Activated naive CD4-positive, alpha-beta T cell treated with anti-CD3 and anti-CD28 coated beads for 36 hours (primary cell): ENCODE measurements at regions of chr12 and their contacts with region 1.

Region 1: DNA sequence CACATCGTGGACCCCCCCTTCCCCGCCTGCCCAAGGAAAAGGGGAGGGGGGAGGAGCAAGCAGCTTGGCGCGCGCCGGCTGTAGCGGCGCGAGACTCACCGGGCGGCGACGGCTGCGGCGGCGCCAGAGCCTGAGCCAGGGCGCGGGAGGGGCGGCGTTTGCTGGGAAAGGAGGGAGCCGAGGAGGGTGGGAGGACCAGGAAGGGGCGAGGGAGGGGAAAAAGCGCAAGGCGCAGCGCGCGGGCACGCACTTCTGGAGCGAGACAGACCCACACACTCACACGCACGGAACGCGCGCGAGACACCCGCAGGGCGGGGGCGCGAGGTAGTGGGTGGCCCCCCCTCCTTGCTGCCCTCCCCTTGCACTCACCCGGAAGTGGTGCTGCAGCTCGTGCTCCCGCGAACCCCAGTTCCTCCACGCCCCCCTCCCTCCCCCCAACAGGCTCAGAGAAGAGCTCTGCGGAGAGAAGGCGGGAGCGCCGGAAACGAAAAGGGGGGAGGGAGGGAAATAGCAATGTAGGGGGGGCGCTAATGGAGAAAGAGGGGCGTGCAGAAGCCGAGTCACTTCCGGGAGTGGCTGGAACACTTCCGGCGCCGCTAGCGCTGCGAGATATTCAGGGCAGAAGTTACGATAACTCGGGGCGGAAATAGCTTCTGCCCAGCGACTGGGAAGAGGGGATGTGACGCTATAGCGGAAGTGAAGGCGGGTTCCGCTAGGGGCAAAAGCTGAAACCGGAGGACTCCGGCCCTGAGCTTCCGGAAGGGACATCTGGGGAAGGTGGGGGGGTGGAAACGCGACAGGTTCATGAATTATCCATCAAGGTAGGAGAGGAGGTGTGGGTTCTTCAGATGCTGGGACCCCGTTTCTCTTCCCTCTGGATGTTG is at the start of gene ZNF384:
- DNase-seq: peak; percentile 97
- H3K4me3 Mint-ChIP-seq: peak within 1 kb of the TSS; percentile 92
- H3K27ac Mint-ChIP-seq: peak within 1 kb of the TSS; percentile 95
- H3K4me1 Mint-ChIP-seq: peaks cover 52% of the 10 kb centered on the region
- H3K27me3 Mint-ChIP-seq: no peaks in the 10 kb centered on the region
- total RNA-seq, gene ZNF384: 52.6 to 56.6 TPM

Region 2: GRCh38 chr12:6554168-6555017 is 134.8 kb before region 1 on chr12:
- CTCF ChIA-PET with region 1: interaction called, 3 read pairs
- intact Hi-C with region 1: loop called (anchors 1 kb)
- DNase-seq: peak; percentile 86
- H3K4me3 Mint-ChIP-seq: peak overlapping the region; percentile 78
- H3K27ac Mint-ChIP-seq: peak overlapping the region; percentile 1
- H3K4me1 Mint-ChIP-seq: peaks cover 52% of the 10 kb centered on the region
- H3K27me3 Mint-ChIP-seq: no peaks in the 10 kb centered on the region

Region 3: GRCh38 chr12:6613776-6614512 is 75.3 kb before region 1 on chr12:
- CTCF ChIA-PET with region 1: interaction called, 21 read pairs
- intact Hi-C with region 1: loop called (anchors 1 kb)
- DNase-seq: peak; percentile 32
- H3K4me3 Mint-ChIP-seq: no peak overlapping the region
- H3K27ac Mint-ChIP-seq: no peak overlapping the region
- H3K4me1 Mint-ChIP-seq: peaks cover 39% of the 10 kb centered on the region
- H3K27me3 Mint-ChIP-seq: no peaks in the 10 kb centered on the region

Region 4: DNA sequence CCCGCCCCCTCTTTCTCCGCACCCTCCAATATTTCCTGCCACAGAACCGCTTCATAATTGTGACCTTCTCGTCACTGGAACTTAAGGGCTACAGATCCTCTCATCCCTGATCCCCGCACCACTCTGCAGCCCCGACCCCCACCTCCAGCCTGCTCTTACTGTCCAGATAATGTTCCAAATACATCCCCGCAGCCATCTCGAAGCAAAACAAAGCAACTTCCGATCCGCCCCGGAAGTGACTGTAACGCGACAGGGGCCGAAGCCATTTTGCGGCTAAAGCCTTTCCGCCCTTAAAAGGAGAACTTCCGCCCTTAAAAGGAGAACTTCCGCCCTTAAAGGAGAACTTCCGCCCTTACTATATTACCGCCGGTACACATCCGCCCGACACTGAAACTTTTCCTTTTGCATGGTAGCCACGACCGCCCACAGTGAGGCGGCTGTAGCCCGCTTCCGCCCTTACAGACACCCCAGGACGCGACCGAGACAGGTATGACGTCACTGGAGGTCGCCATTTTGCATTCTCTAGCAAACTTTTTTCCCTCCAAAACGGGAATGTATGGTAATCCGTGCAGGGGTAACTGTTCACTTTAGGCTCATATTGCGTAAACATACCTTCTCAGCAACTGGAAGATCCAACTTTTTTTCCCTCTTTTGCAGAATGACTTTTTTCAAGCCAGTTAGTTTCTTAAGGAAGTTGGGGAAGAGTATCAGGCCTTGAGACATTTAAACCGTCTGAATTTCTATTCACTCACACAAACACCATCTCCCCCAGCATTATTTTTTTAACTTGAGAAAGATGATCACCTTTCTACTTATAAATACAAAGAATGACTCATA is 26.1 kb before region 1 on chr12 and contains the start of gene ING4:
- CTCF ChIA-PET with region 1: interaction called, 10 read pairs
- intact Hi-C with region 1: loop called (anchors 1 kb)
- DNase-seq: peak; percentile 99
- H3K4me3 Mint-ChIP-seq: peak within 1 kb of the TSS; percentile 86
- H3K27ac Mint-ChIP-seq: peak within 1 kb of the TSS; percentile 88
- H3K4me1 Mint-ChIP-seq: peaks cover 25% of the 10 kb centered on the region
- H3K27me3 Mint-ChIP-seq: no peaks in the 10 kb centered on the region
- total RNA-seq, gene ING4: 17.3 to 17.8 TPM

Region 5: DNA sequence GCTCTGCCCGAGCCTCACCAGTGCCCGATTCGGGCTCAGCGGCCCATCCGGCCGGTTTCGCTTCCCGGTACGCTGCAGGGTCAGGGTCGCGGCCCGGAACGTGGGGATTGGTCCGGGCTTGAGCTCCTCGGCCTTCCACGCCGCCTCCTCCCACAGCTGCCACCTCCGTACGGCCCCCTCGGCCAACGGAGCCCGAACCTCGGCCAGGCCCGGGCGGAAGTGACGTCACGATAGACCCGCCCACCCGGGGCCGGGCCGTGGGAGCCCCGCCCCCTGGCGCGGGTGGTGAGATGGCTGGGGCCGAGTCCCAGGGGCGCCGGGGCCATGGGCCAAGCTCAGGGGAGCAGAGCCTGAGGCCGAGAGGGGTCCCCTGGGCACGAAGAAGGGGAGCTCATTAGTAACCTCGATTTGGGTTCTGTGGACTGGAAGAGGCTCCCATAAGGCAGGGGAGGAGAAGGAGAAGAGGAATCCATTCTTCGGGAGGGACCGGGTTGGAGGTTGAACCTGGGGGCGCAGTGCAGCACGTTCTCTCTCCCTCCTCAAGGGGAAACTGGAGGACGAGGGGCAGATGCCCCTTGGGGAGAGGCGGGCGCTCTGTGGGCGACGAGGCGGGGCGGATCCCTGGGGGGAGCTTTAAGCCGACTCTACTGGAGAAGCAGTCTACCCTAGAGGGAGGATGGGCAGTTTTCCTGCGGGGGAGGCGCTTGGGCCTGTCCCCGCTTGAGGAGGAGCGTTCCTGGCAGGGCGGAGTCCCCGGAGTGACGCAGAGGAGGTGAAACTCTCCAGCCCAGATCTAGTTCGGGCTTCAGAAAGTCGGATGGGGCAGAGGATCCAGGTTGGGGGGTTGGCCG is 63.9 kb after region 1 on chr12 and contains the start of gene MLF2:
- CTCF ChIA-PET with region 1: interaction called, 4 read pairs
- intact Hi-C with region 1: loop called (anchors 1 kb)
- DNase-seq: peak; percentile 99
- H3K4me3 Mint-ChIP-seq: peak within 1 kb of the TSS; percentile 96
- H3K27ac Mint-ChIP-seq: peak within 1 kb of the TSS; percentile 97
- H3K4me1 Mint-ChIP-seq: peaks cover 25% of the 10 kb centered on the region
- H3K27me3 Mint-ChIP-seq: no peaks in the 10 kb centered on the region
- total RNA-seq, gene MLF2: 140 to 143 TPM

Region 6: DNA sequence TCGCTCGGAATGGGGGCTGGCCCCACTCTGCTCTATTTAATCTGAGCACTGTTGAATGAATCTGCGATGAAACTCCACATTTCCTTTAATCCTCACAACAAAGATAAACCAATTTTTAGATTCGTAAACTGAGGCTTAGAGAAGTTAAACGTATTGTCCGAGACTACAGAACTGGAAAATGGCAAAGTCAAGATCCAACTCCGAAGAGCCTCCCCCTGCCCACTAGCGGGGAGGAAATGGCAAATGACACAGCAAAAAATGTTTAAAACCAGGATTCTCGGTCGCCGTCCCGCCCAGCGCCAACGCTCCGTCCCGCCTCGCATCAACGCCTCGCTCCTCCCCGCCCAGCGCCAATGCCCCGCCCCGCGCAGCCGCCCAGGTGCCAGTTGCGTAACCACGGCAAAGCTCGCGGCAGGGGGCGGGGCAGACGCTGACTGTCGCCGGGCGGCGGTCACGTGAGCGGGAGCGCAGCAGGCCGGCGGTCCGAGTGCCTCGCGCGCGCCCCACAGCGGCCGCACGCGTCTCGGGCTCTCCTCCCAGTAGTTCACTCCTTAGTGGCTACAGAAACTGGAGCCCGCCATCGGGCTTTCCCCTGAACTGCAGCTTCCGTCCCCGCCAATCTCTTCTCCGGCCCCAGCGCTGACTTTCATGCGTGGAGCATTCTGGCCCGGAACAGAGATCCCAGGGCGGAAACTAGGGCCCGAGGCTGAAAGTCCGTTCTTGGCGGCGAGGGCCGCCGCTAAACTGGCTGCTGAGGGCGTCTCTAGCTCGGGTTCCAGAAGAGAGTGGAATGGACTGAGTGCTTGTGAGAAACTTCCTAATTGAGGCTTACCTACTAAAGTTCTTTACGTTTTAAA is 201.8 kb after region 1 on chr12:
- CTCF ChIA-PET with region 1: no interaction called
- intact Hi-C with region 1: loop called (anchors 1 kb)
- DNase-seq: peak; percentile 100
- H3K4me3 Mint-ChIP-seq: peak overlapping the region; percentile 90
- H3K27ac Mint-ChIP-seq: peak overlapping the region; percentile 98
- H3K4me1 Mint-ChIP-seq: peaks cover 16% of the 10 kb centered on the region
- H3K27me3 Mint-ChIP-seq: no peaks in the 10 kb centered on the region